ENCODE measurements at regions of chr16 and their contacts with region 1.

Region 1: DNA sequence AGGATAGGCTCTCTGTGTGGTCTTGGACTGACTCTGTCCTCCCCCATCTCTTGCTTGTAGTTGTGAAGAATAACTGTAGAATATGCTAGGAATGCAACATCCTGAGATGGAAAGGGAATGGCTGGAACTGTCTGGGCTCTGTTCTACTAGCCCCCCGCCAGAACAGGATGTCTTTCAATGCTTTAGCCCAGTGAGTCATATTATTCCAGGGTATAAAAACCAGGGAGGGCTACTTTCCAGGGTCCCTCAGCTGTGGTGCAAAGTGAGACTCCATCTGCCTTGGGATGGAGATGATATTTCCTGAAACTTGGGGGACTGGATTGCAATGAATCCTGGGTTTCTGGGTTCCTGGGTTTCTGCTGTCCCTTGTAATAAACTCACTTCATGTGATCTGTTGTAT is 32.1 kb downstream of the HYDIN start:
- DNase-seq: no peak
- ATAC-seq: no peak

Region 2: GRCh38 chr16:71276589-71277334 is 78.4 kb after region 1 on chr16:
- intact Hi-C with region 1: loop called (anchors 2 kb)
- DNase-seq: no peak
- ATAC-seq: no peak

Measured in sciatic nerve (tissue), 2 donors.